ENCODE measurements at regions of chr1 and their contacts with region 1.

Region 1: DNA sequence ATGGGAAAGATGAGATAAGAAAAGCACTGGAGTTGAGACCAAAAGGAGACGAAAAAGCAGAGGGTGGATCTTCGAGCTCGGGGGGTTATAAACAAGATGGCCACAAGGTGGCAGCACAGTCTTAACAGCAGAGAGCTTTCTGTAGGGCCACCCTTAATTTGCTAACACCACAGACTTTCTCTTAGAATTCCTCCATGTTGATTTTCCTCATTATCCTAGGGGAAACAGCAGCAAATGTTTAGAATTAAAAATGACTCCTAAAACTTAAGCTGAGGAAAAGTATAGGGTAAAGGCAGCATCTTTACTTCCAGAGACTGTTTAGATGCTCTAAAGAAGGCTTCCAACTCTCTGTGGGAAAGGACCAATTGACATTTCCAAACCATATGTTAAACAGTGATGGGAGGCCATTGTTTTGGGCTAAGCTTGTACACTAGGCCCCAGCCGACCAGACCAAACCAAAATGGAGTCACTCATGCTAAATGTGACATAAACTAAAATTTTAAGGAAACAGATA is 2.5 kb upstream of the APOBEC4 start:
- DNase-seq: peak; percentile 57 to 89
- H3K4me3 ChIP-seq: no peak overlapping the region
- H3K27ac ChIP-seq: no peak overlapping the region
- H3K4me1 ChIP-seq: no peaks in the 10 kb centered on the region
- H3K27me3 ChIP-seq: no peaks in the 10 kb centered on the region
- CTCF ChIP-seq: peak; percentile 56 to 84 (median 80)
- EP300 ChIP-seq: no peak
- POLR2A ChIP-seq: no peak
- RAD21 ChIP-seq: peak; percentile 94 to 95

Region 2: DNA sequence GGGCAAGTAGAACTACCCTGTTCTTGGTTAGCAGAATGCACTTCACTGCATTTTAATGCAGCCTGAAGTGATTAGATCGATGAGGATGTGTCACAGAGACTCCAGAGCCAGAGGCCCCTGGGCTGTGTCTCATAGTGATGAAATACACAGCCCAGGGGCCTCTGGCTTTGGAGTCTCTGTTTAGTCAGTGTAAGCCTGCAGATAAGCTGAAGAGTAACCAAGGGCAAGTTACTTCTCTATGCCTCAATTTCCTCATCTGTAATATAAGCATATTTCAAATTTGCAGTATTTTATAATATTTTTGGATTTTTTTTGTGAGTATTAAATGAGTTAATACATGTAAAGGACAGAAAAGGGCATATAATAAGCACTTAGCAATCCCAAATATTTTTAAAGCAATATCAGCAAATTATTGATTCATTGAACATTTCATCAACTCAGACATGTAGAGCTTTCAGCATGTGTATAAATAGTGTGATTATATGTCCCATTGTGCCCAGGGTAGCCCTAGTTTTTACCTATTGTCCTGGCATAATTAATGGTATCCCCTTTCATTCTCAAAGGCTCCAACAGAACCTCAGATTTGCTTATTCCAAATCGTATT is 21.1 kb after region 1 on chr1:
- CTCF ChIA-PET with region 1: interaction called, 18 read pairs
- POLR2A ChIA-PET with region 1: no interaction called
- DNase-seq: no peak
- H3K4me3 ChIP-seq: no peak overlapping the region
- H3K27ac ChIP-seq: no peak overlapping the region
- H3K4me1 ChIP-seq: 0 out of 7 replicates have a peak, but pooled peaks cover 0 to 2% (median 0%) of the 10 kb centered on the region in 4 experiments
- H3K27me3 ChIP-seq: no peaks in the 10 kb centered on the region
- CTCF ChIP-seq: no peak
- EP300 ChIP-seq: no peak
- POLR2A ChIP-seq: no peak
- RAD21 ChIP-seq: no peak

Region 3: DNA sequence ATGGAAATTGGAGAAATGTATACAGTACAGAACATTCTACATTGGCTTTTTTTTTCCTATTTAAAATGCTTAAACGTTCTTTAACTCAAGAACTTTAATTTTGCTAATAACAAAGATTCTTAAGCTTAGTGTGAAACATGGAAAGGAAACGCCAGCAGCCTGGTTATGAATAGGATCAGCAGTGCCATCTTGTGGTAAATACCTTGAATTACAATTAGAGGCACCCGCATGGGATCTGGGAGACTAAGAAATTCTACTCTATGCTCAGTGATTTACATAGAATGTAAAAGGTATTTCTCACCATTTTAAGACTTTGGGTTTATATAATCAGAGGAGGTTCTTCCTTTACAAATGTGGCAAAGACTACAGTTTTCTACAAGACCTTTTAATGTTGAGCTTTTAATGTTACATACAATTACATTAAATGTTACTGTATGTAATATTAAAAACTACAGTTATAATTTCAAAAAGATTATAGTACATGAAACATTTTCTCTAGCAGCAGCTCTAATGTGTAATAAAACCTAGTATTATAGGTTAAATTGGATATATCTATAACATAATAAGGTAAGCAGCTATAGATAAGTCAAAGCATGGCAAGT is 29.6 kb after region 1 on chr1:
- CTCF ChIA-PET with region 1: interaction called, 70 read pairs
- POLR2A ChIA-PET with region 1: interaction called, 4 read pairs
- DNase-seq: no peak
- H3K4me3 ChIP-seq: no peak overlapping the region
- H3K27ac ChIP-seq: no peak overlapping the region
- H3K4me1 ChIP-seq: peaks cover 0 to 2% (median 0%) of the 10 kb centered on the region in 4 experiments; a peak in 1 of 7 replicates
- H3K27me3 ChIP-seq: no peaks in the 10 kb centered on the region
- CTCF ChIP-seq: peak in 2 of 3 experiments; percentile 58 to 71; a peak in 3 of 4 replicates
- EP300 ChIP-seq: no peak
- POLR2A ChIP-seq: no peak
- RAD21 ChIP-seq: peak; percentile 81 to 82

Region 4: GRCh38 chr1:183694066-183694465 is 38.4 kb after region 1 on chr1:
- CTCF ChIA-PET with region 1: interaction called, 13 read pairs
- POLR2A ChIA-PET with region 1: no interaction called
- DNase-seq: no peak
- H3K4me3 ChIP-seq: no peak overlapping the region
- H3K27ac ChIP-seq: no peak overlapping the region
- H3K4me1 ChIP-seq: no peaks in the 10 kb centered on the region
- H3K27me3 ChIP-seq: no peaks in the 10 kb centered on the region
- CTCF ChIP-seq: no peak
- EP300 ChIP-seq: no peak
- POLR2A ChIP-seq: no peak
- RAD21 ChIP-seq: no peak

Region 5: DNA sequence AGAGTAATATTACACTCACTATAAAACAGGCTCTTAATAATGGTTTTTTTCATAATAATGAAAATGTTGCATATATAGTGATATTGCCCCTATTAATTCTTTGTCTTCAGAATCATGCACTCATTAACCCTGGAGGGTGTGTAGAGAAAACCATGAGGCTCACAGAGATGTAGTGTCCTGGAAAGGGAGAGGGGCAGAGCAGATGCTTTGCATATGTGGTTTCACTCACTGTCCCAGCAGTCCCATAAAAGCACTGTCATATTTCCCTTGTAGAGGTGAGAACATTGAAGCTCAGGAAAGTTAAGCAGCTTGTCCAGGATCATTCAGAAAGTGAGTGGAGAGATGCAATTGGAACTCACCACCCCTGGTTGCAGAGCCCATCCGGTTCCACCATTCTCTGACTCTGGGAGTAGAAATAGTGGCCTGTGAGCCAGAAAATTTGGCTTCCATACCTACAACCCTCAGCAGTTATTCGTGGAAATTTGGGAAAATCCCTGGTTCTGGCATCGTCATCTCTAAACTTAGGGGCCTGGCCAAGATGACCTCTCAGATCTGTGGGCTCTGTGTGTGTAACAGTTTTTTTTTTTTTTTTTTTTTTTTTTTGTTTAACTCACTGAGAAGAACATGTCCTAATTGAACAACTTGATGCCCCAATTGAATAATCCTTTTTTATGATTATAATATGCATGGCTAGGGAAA is 235.7 kb after region 1 on chr1:
- CTCF ChIA-PET with region 1: interaction called, 12 read pairs
- POLR2A ChIA-PET with region 1: no interaction called
- DNase-seq: no peak
- H3K4me3 ChIP-seq: no peak overlapping the region
- H3K27ac ChIP-seq: no peak overlapping the region
- H3K4me1 ChIP-seq: peaks cover 0 to 2% (median 0%) of the 10 kb centered on the region in 4 experiments; a peak in 1 of 7 replicates
- H3K27me3 ChIP-seq: no peaks in the 10 kb centered on the region
- CTCF ChIP-seq: no peak
- EP300 ChIP-seq: no peak
- POLR2A ChIP-seq: no peak
- RAD21 ChIP-seq: no peak

Region 6: GRCh38 chr1:183908079-183908478 is 252.5 kb after region 1 on chr1:
- CTCF ChIA-PET with region 1: interaction called, 87 read pairs
- POLR2A ChIA-PET with region 1: no interaction called
- DNase-seq: no peak
- H3K4me3 ChIP-seq: no peak overlapping the region
- H3K27ac ChIP-seq: no peak overlapping the region
- H3K4me1 ChIP-seq: no peaks in the 10 kb centered on the region
- H3K27me3 ChIP-seq: no peaks in the 10 kb centered on the region
- CTCF ChIP-seq: no peak
- EP300 ChIP-seq: no peak
- POLR2A ChIP-seq: no peak
- RAD21 ChIP-seq: no peak